Dendritic cell treated with granulocyte-macrophage colony-stimulating factor and Interleukin-4, amounts not matched to agents 40 ng/mL and 50 ng/mL, for 4 days (primary cell): ENCODE measurements at regions of chr6 and their contacts with region 1.

Region 1: GRCh38 chr6:29589423-29590048 is 4.6 kb downstream of the OR2H2 start:
- H3K4me3 Mint-ChIP-seq: no peak overlapping the region
- H3K27ac Mint-ChIP-seq: no peak overlapping the region
- H3K4me1 Mint-ChIP-seq: peaks cover 7% of the 10 kb centered on the region
- H3K27me3 Mint-ChIP-seq: peaks cover 19% of the 10 kb centered on the region

Region 2: GRCh38 chr6:29028821-29029220 is 560.7 kb before region 1 on chr6:
- intact Hi-C with region 1: loop called (anchors 10 kb)
- H3K4me3 Mint-ChIP-seq: no peak overlapping the region
- H3K27ac Mint-ChIP-seq: no peak overlapping the region
- H3K4me1 Mint-ChIP-seq: no peaks in the 10 kb centered on the region
- H3K27me3 Mint-ChIP-seq: peaks cover 25% of the 10 kb centered on the region